GM10248 (cell line): ENCODE measurements at regions of chr16 and their contacts with region 1.

Region 1: DNA sequence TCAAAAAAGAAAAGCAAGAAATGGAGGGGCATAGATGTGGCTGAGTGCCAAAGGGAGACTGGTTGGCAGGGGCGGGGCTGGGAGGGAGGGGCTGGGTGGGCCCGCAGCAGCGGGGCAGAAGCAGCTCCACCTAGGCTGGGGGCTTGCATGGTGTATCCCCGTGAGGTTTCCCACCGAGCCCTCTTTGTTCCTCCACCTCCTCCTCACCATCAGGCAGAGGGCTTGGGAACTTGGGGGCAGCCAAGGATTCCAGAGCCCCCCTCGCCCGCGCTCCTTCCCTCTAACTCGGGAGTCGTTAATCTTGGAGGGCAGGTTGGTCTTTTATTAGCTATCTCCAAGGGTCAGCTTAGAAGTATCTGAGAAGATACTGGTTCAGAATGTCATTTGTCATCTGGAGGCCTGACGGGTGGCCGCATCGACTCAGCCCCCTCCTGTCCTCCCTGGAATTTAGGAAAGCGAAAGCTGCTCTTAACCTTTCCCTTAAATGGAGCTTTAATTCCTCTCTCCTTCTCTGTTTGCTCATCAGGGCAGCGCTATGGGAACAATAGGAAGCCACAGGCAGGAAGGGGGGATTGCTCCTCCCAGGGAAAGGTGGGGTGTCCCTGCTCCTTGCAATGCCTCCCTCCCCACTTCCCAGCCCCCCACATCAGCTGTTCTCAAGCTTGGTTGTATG is 274.3 kb upstream of the XYLT1 start:
- DNase-seq: no peak
- CTCF ChIP-seq: no peak

Region 2: DNA sequence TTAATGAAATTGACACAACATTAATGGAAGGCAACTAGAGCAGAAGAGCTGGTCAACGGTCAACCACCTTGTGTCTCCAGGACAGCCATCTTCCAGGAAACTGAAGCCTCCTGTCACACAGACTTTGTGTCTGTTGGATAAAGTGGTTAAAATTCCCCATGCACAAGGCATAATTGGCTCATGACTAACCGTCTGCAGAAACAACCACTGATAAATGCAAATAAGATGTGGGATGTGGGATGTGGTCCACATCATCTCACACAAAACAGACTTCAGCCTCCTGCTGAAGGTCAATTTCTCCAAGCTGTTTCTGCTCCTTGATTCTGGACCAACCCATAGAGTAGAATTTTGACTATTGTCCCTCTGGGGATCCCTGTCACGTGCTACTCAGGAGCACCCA is 247.4 kb before region 1 on chr16:
- CTCF ChIA-PET with region 1: no interaction called
- POLR2A ChIA-PET with region 1: no interaction called
- DNase-seq: no peak
- CTCF ChIP-seq: no peak

Region 3: GRCh38 chr16:17691106-17691898 is 53.7 kb before region 1 on chr16:
- CTCF ChIA-PET with region 1: no interaction called
- POLR2A ChIA-PET with region 1: no interaction called
- DNase-seq: no peak
- CTCF ChIP-seq: no peak

Region 4: DNA sequence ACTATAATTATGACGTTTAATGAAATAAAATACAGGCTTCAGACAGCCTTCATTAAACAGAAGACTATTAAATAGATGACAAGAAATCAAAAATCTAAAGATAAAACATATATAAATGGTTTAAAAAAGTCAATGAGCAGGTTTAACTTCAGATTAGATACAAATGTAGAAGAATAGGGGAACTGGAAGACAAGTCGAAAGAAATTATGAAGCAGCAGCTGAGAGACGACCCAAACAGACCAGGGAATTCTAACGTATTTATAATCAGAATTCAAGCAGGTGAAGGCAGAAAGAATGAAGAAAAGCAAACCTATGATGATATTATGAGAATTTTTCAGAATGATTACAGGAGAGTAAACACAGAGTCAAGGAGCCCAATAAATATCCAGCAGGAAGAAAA is 39.2 kb before region 1 on chr16:
- CTCF ChIA-PET with region 1: no interaction called
- POLR2A ChIA-PET with region 1: no interaction called
- DNase-seq: no peak
- CTCF ChIP-seq: no peak

Region 5: GRCh38 chr16:18048853-18049546 is 304.0 kb after region 1 on chr16:
- CTCF ChIA-PET with region 1: no interaction called
- POLR2A ChIA-PET with region 1: interaction called, 10 read pairs
- DNase-seq: no peak
- CTCF ChIP-seq: no peak